HCT116 (cell line): ENCODE measurements at regions of chr1 and their contacts with region 1.

Region 1: DNA sequence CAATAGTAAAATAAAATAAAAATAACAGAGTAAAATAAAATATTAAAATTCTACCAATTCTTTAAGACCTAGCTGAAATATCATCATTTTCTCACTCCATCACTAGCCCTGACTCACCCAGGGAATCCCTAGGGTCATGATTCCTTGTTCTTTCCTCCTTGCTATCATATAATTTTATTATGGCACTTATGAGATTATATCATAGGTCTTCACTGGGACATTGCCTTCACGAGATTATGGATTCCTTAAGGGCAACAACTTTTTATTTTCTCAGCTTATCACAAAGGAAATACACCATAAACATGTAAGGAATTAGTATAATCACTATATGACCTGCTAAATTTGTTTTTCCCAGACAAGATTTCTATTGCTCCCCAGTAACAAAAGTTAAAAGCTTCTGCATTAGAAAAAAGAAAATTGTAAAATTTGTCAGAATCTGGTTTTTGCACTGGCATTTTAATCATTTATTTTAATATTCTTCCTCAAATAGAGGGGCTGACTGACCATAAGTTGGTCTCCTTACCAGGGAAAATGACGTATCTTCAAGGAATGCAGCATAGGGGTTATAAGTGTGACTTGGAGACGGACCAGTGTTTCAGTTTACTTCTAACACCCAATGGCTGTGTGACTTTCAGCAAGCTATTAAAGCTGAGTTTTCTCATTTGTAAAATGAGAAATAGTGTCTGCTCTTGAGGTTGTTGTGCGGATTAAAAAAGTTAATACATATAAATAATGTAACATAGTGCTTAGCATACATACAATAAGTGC is 8.8 kb upstream of the CLCA4 start:
- DNase-seq: no peak
- ATAC-seq: no peak
- H3K4me3 ChIP-seq: no peak overlapping the region
- H3K27ac ChIP-seq: no peak overlapping the region
- H3K4me1 ChIP-seq: 0 out of 4 replicates have a peak, but pooled peaks cover 0 to 3% of the 10 kb centered on the region in 2 experiments
- H3K27me3 ChIP-seq: no peaks in the 10 kb centered on the region
- CTCF ChIP-seq: no peak
- POLR2A ChIP-seq: no peak
- RAD21 ChIP-seq: no peak

Region 2: DNA sequence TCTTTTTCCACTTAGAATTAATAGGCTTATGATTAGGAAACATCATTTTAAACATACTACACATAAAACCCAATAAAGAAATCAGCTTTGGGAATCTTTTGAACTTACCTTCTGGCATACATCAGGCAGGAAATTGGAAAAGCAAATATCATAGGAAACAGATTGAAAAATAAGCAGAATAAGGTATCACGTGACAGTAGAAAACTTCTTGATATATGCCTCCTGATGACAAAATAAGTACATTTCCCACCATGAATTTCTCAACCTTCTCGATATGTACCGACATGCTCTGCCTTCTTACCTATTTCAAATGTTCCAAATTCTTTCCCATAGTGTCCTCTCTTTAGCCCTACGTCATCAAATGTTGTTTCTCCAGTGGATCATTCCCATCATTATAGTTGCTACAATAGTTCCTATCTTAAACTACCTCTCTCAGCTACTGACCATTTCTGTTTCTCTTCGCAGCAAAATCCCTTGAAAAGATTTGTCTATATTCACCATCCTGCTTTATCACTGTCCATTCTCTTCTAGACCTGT is 81.3 kb after region 1 on chr1:
- CTCF ChIA-PET with region 1: no interaction called
- POLR2A ChIA-PET with region 1: no interaction called
- RAD21 ChIA-PET with region 1: interaction called in 1 of 2 experiments, 12 read pairs
- intact Hi-C with region 1: no loop called
- DNase-seq: no peak
- ATAC-seq: no peak
- H3K4me3 ChIP-seq: no peak overlapping the region
- H3K27ac ChIP-seq: no peak overlapping the region
- H3K4me1 ChIP-seq: no peaks in the 10 kb centered on the region
- H3K27me3 ChIP-seq: no peaks in the 10 kb centered on the region
- CTCF ChIP-seq: no peak
- POLR2A ChIP-seq: no peak
- RAD21 ChIP-seq: no peak